ENCODE measurements at regions of chr20 and their contacts with region 1.

Region 1: DNA sequence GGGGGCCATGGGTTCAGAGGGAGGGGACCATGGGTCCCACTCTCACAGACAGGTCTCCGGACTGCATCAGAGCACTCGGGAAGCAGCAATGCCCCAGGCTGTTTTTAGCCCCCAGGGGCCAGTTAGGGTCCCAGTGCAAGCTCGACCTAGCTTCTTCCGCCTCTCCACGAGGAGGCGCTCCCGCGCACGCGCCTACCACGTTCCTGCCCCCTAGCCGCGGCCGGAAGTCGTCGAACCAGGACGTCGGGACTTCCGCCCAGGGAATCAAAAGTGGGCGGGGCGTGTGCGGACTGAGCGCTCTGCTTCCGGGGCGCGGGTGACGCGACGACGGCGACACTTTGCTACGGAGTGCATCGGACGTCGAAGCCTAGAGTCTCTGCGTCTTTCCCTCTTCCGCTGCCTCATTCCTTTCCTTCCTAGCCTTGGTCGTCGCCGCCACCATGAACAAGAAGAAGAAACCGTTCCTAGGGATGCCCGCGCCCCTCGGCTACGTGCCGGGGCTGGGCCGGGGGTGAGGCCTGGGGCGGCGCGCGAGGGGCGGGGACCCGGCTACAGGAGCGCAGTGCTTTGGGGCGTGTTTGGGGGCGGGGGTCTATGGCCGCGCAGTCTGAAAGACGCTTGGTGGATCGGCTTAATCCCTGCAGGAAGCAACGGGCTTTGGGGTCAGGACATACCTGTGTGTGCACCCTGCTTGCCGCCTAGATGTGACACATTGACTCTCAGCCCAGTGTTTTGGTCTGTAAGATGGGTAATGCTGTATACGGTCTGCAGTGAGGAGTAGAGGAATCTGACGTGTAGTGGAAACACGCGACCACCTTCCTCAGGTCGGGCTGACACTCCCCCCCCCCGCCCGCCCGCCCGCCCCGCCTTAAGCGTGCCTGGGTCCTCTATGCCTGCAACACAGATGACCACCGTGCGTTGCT is at the start of gene PRPF6:
- DNase-seq: peak; percentile 96
- H3K4me3 Mint-ChIP-seq: peak within 1 kb of the TSS; percentile 79
- H3K27ac Mint-ChIP-seq: peak within 1 kb of the TSS; percentile 92
- H3K4me1 Mint-ChIP-seq: peaks cover 30% of the 10 kb centered on the region
- H3K27me3 Mint-ChIP-seq: no peaks in the 10 kb centered on the region
- CTCF ChIP-seq: peak; percentile 77
- total RNA-seq, gene PRPF6: 70.9 and 88.5 TPM in 2 replicates

Region 2: DNA sequence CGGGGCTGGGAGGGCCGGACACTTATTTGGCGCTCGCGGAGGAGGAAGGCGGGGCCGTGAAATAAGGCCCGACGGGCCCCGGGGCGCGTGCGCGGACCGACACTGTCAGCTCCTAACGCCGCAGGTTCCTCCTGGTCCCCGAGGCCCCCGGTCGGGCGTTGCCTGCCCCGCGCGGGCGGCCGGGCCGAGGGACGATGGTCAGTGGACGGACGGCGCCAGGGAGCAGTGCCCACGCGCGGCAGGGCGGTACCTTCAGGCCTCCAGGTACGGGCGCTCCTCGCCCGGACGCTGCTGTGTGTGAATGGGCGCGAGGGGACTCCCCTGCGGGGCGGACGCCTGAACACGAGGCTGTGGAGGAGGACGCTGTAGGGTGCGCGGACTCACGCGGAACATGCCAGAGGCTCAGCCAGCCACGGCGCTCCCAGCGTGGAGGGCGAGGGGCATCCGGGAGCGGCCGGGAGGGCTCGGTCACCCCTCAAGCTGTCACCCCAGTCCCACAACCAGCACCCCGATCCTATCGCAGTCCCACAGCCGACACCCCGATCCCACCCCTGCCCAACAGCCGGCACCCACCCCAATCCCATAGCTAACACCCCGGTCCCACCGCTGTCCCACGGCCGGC is 353.8 kb before region 1 on chr20:
- CTCF ChIA-PET with region 1: interaction called, 3 read pairs
- POLR2A ChIA-PET with region 1: interaction called, 24 read pairs
- intact Hi-C with region 1: no loop called
- DNase-seq: peak; percentile 93
- H3K4me3 Mint-ChIP-seq: peak overlapping the region; percentile 79
- H3K27ac Mint-ChIP-seq: peak overlapping the region; percentile 88
- H3K4me1 Mint-ChIP-seq: peaks cover 7% of the 10 kb centered on the region
- H3K27me3 Mint-ChIP-seq: no peaks in the 10 kb centered on the region
- CTCF ChIP-seq: no peak

Region 3: DNA sequence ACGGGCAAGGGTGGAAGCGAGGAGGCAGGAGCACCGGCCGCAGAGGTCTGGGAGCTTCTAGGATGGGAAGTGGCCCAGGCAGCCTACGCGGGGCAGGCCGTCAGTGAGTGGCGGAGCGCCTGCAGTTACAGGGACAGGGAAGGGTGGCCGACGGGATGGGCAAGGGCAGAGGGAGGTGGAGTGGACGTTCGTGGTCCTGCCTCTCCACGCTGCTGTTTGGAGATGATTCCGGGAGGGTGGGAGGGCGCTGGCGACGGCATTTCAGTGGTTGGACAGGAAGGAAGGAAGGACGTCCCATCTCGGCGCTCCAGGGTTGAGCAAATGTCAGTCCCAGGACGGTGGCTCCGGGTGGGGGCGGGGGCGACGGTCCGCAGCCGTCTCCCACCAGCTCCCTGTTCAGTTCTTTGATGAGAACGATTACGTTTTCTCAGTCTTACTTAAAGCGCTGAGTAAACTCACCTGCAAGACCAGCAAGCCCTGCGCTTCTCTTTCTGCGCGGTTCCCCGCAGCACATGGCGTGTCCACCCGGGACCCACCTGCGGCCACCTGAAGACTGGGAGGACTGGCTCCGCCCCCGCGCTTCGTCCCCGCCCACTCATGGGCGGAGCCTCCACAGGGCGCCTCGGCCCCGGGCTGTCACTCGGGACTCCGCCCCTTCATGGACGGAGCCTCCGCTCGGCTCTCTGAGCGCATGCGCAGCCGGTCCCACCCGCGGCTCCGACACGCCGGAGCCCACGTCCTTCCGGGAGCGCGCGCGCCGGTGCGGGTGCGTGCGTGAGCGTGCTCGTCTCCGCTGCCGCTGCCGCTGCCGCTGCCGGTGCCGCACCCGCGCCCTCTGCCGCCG is 86.5 kb before region 1 on chr20 and contains the start of gene DNAJC5:
- CTCF ChIA-PET with region 1: interaction called, 6 read pairs
- POLR2A ChIA-PET with region 1: interaction called, 20 read pairs
- intact Hi-C with region 1: no loop called
- DNase-seq: peak; percentile 93
- H3K4me3 Mint-ChIP-seq: peak within 1 kb of the TSS; percentile 66
- H3K27ac Mint-ChIP-seq: peak within 1 kb of the TSS; percentile 88
- H3K4me1 Mint-ChIP-seq: peaks cover 29% of the 10 kb centered on the region
- H3K27me3 Mint-ChIP-seq: no peaks in the 10 kb centered on the region
- CTCF ChIP-seq: no peak
- total RNA-seq, gene DNAJC5: 38.1 and 45.0 TPM in 2 replicates

Region 4: DNA sequence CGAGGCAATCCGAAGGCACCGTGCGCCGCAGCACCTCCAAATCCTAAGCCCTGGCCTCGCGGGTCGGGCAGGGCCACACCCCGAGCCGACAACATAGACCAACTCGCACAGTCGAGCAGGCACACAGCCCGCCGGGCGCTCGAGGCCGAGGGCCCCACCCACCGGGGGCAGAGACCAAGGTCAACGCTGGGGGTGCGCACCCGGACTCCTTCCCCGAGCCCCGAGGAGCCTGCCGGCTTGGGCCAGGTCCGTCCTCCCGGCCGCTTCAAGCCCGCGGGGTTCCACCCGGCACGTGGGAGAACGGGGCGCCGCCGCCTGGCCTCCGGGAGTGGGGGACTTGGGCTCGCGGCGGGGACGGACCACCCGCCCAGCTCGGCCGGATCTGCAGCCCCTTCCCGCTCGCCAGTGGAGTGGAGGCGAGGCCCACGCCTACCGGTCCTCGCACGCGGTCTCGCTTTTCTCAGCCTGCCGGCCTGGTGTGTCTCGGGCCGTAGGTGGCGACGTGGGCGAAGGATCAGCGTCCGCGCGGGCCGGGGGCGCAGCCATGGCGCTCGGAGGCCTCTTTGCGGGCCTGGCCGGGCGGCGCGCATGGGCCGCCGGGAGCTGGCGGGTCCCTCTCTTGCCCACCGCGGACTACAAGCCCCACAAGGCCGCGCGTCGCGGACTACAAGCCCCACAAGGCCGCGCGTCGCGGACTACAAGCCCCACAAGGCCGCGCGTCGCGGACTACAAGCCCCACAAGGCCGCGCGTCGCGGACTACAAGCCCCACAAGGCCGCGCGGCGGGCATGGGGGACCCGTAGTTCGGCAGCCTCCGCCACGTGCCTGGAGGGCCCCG is 25.0 kb before region 1 on chr20 and contains the start of gene UCKL1:
- CTCF ChIA-PET with region 1: interaction called, 9 read pairs
- POLR2A ChIA-PET with region 1: interaction called, 40 read pairs
- intact Hi-C with region 1: no loop called
- DNase-seq: peak; percentile 81
- H3K4me3 Mint-ChIP-seq: peak within 1 kb of the TSS; percentile 74
- H3K27ac Mint-ChIP-seq: no peak within 1 kb of the TSS
- H3K4me1 Mint-ChIP-seq: peaks cover 21% of the 10 kb centered on the region
- H3K27me3 Mint-ChIP-seq: no peaks in the 10 kb centered on the region
- CTCF ChIP-seq: no peak
- total RNA-seq, gene UCKL1: 38.6 and 43.7 TPM in 2 replicates

Region 5: DNA sequence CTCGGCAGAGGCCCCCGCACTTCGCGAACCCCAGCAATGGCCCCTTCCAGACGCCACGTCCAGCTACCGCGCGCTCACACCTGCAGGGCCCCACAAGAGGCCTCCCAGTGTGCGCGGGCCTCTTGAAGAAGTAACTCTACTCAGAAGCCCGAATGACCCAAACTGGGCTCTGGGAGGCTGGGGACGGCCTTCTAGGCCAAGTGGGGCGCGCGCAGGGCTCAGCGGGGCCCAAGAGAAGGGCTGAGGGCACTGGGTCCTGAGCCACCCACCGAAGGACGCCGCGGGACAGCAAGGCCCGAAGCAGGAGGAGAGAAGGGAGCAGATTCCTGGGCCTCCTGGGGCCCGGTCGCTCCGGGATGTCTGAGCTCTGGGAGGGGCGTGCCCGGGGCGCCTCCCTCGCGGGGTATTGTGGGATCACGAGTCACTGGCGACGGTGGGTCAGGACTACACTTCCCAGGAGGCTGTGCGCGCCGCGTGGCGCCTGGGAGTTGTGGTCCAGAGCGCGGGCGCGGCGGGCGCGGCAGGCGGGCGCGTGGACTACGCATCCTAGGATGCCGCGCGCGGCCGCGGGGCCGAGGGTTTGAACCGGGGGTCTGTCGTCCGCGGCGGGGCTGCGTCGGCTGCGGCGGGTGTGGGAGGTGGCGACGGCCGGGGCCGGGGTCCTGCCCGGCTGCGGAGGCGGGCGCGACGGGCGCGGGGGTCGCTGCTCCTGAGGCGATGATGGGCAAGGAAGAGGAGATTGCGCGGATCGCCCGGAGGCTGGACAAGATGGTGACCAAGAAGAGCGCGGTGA is 81.7 kb after region 1 on chr20 and contains the start of gene TCEA2:
- CTCF ChIA-PET with region 1: interaction called, 31 read pairs
- POLR2A ChIA-PET with region 1: interaction called, 34 read pairs
- intact Hi-C with region 1: loop called (anchors 5 kb)
- DNase-seq: peak; percentile 95
- H3K4me3 Mint-ChIP-seq: peak within 1 kb of the TSS; percentile 88
- H3K27ac Mint-ChIP-seq: peak within 1 kb of the TSS; percentile 89
- H3K4me1 Mint-ChIP-seq: peaks cover 41% of the 10 kb centered on the region
- H3K27me3 Mint-ChIP-seq: no peaks in the 10 kb centered on the region
- CTCF ChIP-seq: no peak
- total RNA-seq, gene TCEA2: 30.8 and 39.7 TPM in 2 replicates

Region 6: GRCh38 chr20:64119681-64120341 is 138.7 kb after region 1 on chr20:
- CTCF ChIA-PET with region 1: interaction called, 7 read pairs
- POLR2A ChIA-PET with region 1: interaction called, 4 read pairs
- intact Hi-C with region 1: loop called (anchors 2 kb)
- DNase-seq: no peak
- H3K4me3 Mint-ChIP-seq: no peak overlapping the region
- H3K27ac Mint-ChIP-seq: no peak overlapping the region
- H3K4me1 Mint-ChIP-seq: no peaks in the 10 kb centered on the region
- H3K27me3 Mint-ChIP-seq: peaks cover 38% of the 10 kb centered on the region
- CTCF ChIP-seq: no peak